ENCODE measurements at regions of chr20 and their contacts with region 1.

Region 1: GRCh38 chr20:17749975-17750721 is 50.4 kb downstream of the BANF2 start:
- DNase-seq: peak; percentile 87

Region 2: GRCh38 chr20:17882065-17882833 is 132.1 kb after region 1 on chr20:
- intact Hi-C with region 1: loop called (anchors 5 kb)
- DNase-seq: no peak

Region 3: DNA sequence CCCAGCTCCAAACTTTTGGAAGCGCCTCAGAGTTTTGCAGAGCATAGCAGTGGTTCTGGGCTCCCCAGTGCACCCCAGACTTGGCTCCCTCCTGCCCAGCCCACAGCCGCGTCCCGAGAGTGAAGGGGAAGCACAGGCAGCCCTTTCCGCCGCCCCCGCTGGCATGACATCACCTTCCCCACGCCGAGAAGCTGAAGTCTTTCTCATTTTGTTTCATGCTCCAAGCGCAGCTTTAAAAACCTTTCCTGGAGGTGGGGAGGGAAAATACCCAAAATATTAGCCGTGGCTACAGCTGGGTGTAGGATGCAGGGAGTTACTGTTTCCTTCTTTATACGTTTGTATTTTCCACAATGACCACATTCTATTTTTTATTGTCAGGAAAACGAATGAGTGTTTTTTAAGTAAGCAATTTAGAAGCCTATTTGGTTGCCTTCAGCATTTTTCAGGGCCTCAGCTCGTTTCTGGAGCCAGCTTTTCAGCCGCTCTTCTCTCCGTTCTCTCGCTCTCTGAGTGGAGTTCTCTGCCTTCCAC is 145.6 kb after region 1 on chr20:
- intact Hi-C with region 1: no loop called
- DNase-seq: peak; percentile 84

Region 4: DNA sequence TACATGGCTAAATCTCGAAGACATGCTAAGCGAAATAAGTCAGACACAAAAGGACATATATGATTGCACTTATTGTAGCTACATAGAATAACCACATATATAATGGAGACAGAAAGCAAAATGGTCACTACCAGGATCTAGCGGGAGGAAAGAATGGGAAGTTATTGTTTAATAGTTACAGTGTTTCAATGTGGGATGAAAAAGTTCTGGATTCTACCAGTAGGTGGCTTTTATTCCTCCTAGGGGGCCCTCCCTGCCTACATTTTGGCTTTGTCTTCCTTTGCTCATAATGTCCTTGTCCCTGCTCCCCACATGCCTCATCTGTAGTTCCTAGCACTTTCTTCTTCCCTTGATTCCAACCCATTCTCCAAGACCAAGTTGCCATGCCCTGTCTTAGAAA is 554.4 kb after region 1 on chr20:
- intact Hi-C with region 1: no loop called
- DNase-seq: no peak